ENCODE measurements at regions of chr2 and their contacts with region 1.

Region 1: DNA sequence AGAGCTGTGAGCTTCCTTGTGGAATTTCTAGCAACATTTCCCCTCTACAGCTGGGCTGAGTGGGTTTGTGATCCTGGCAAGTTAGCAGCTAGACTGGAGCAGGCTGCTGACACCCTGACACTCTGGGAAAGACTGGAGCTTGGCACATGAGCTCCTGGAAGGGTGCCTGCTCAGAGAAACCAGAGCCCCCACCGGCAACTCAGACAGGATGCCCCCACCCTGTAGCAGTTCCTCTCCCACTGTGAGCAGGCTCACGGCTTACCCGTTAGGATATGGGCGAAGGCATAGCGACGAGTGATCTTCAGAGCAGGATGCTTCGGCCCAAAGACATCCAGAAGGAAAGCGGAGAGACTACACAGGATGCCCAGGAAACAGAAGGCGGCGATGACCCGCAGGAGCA is 11.2 kb downstream of the TMEM127 start:
- DNase-seq: peak; percentile 55
- ATAC-seq: peak; percentile 16 to 17

Region 2: GRCh38 chr2:96091533-96092334 is 162.8 kb before region 1 on chr2:
- intact Hi-C with region 1: no loop called
- DNase-seq: no peak
- ATAC-seq: no peak

Region 3: GRCh38 chr2:96138179-96139145 is 116.1 kb before region 1 on chr2 and contains the start of gene ASTL:
- intact Hi-C with region 1: loop called in 1 of 2 experiments (anchors 2 kb)
- DNase-seq: no peak
- ATAC-seq: peak; percentile 54 to 65
- total RNA-seq, gene ASTL: not detected

Region 4: DNA sequence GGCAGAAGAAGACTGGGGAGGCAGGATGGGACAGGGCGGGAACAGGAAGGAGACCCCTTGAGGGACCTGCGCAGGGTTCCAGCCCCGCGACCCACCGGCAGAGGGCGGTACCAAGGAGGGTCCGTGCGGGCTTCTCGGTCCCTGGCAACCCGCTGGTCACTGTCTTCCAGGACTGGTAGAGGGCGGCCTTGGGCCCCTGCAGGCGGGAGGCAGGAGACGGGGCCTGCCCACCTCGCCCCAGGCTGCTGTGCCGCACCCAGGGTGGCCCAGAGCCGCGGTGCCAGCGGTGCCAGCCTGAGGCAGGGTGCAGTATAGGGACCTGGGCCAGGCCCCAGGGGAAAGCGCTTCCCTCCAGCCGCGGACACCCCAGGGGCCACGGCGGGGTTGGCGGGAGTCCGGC is 216.1 kb after region 1 on chr2:
- intact Hi-C with region 1: no loop called
- DNase-seq: peak; percentile 71
- ATAC-seq: peak; percentile 89 to 93